ENCODE measurements at regions of chr18 and their contacts with region 1.

Region 1: DNA sequence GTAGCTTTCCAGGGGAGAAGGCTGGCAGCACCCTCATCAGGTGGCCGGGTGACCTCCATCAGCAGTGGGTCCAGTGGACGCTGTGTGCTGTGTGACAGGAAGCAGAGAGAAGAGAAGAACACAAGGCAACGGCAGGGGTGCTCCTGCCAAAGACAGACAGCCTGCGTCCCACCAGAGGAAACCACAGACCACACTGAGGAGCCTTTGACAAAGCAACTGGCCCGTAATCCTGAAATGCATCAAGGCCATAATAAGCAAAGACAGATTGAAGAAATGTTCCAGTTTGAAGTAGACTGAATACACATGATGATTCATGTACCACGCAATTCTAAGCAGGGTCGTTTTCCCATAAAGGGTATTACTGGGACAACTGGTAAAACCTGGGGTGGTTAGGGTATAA is 172.4 kb downstream of the FBXO15 start:
- DNase-seq: no peak
- H3K4me3 ChIP-seq: no peak overlapping the region
- H3K27ac ChIP-seq: no peak overlapping the region
- H3K4me1 ChIP-seq: no peaks in the 10 kb centered on the region
- H3K27me3 ChIP-seq: peaks cover 6% of the 10 kb centered on the region
- CTCF ChIP-seq: no peak
- POLR2A ChIP-seq: no peak

Region 2: GRCh38 chr18:73891572-73892421 is 83.5 kb before region 1 on chr18:
- intact Hi-C with region 1: loop called in 1 of 2 experiments (anchors 10 kb)
- DNase-seq: no peak
- H3K4me3 ChIP-seq: no peak overlapping the region
- H3K27ac ChIP-seq: no peak overlapping the region
- H3K4me1 ChIP-seq: no peaks in the 10 kb centered on the region
- H3K27me3 ChIP-seq: no peaks in the 10 kb centered on the region
- CTCF ChIP-seq: no peak
- POLR2A ChIP-seq: no peak

Region 3: GRCh38 chr18:73924836-73925235 is 50.4 kb before region 1 on chr18:
- intact Hi-C with region 1: loop called in 1 of 2 experiments (anchors 5 kb)
- DNase-seq: no peak
- H3K4me3 ChIP-seq: no peak overlapping the region
- H3K27ac ChIP-seq: no peak overlapping the region
- H3K4me1 ChIP-seq: no peaks in the 10 kb centered on the region
- H3K27me3 ChIP-seq: no peaks in the 10 kb centered on the region
- CTCF ChIP-seq: no peak
- POLR2A ChIP-seq: no peak

Measured in adrenal gland (tissue), 19 donors.